SK-N-SH (cell line): ENCODE measurements at regions of chr17 and their contacts with region 1.

Region 1: DNA sequence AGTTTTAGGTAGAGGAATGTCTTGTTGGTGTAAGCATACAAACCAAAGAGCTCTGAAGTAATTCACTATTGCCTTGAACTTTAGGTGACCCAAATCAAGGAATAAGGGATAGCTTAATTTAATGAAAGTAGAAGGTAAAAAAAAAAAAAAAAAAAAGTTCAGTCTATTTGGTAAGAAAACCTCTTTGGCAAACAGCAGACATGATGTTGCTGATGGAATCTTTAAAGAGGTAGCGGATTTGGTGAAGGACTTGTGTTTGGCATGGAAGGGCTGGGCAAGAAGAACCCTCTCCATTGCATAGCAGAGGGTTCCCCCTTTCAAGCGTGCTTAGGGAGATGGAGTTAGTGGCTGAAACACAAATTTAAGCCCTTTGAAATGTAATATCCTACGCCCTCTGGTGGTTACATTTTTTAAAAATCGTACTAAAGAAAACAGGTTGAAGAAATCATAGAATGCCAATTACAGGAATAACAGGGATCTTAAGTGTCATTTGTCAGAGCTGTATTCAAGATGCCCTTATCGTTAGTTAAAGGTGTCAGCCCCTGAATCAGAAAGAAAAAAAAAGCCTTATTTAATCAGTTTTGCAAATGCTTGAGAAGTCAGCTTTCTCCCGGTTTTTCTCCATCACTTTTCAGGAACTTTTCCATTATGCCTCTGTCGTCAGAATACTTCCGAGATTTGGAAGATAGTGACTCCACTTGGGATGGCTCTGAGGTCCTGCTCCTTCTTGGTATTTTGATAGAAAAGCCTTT is 383.1 kb downstream of the KCNJ2 start:
- DNase-seq: peak; percentile 72
- H3K4me3 ChIP-seq: no peak overlapping the region
- H3K27ac ChIP-seq: no peak overlapping the region; a peak in 1 of 4 replicates
- H3K4me1 ChIP-seq: peaks cover 0 to 2% of the 10 kb centered on the region in 2 experiments; a peak in 2 of 4 replicates
- H3K27me3 ChIP-seq: no peaks in the 10 kb centered on the region
- CTCF ChIP-seq: peak; percentile 81
- EP300 ChIP-seq: no peak
- RAD21 ChIP-seq: peak; percentile 87

Region 2: GRCh38 chr17:69567130-69567529 is 985.3 kb before region 1 on chr17:
- CTCF ChIA-PET with region 1: interaction called, 18 read pairs
- POLR2A ChIA-PET with region 1: no interaction called
- DNase-seq: no peak
- H3K4me3 ChIP-seq: no peak overlapping the region
- H3K27ac ChIP-seq: no peak overlapping the region
- H3K4me1 ChIP-seq: peaks cover 0 to 3% of the 10 kb centered on the region in 2 experiments; a peak in 1 of 4 replicates
- H3K27me3 ChIP-seq: no peaks in the 10 kb centered on the region
- CTCF ChIP-seq: no peak
- EP300 ChIP-seq: no peak
- RAD21 ChIP-seq: no peak

Region 3: GRCh38 chr17:70144260-70144846 is 408.1 kb before region 1 on chr17:
- CTCF ChIA-PET with region 1: interaction called, 14 read pairs
- POLR2A ChIA-PET with region 1: no interaction called
- DNase-seq: peak; percentile 47
- H3K4me3 ChIP-seq: no peak overlapping the region; a peak in 1 of 4 replicates
- H3K27ac ChIP-seq: no peak overlapping the region
- H3K4me1 ChIP-seq: peaks cover 0 to 3% of the 10 kb centered on the region in 2 experiments; a peak in 2 of 4 replicates
- H3K27me3 ChIP-seq: no peaks in the 10 kb centered on the region
- CTCF ChIP-seq: peak; percentile 95
- EP300 ChIP-seq: no peak
- RAD21 ChIP-seq: peak; percentile 83

Region 4: GRCh38 chr17:70365091-70365583 is 187.3 kb before region 1 on chr17:
- CTCF ChIA-PET with region 1: no interaction called
- POLR2A ChIA-PET with region 1: no interaction called
- DNase-seq: no peak
- H3K4me3 ChIP-seq: no peak overlapping the region
- H3K27ac ChIP-seq: peak overlapping the region; percentile 42 to 50; a peak in 3 of 4 replicates
- H3K4me1 ChIP-seq: peaks cover 0 to 5% of the 10 kb centered on the region in 2 experiments; a peak in 2 of 4 replicates
- H3K27me3 ChIP-seq: no peaks in the 10 kb centered on the region
- CTCF ChIP-seq: no peak
- EP300 ChIP-seq: no peak
- RAD21 ChIP-seq: no peak

Region 5: GRCh38 chr17:70378076-70378475 is 174.3 kb before region 1 on chr17:
- CTCF ChIA-PET with region 1: interaction called, 12 read pairs
- POLR2A ChIA-PET with region 1: no interaction called
- DNase-seq: peak; percentile 20
- H3K4me3 ChIP-seq: no peak overlapping the region
- H3K27ac ChIP-seq: peak overlapping the region in 1 of 2 experiments; percentile 71; a peak in 2 of 4 replicates
- H3K4me1 ChIP-seq: peaks cover 0 to 20% of the 10 kb centered on the region in 2 experiments; a peak in 2 of 4 replicates
- H3K27me3 ChIP-seq: no peaks in the 10 kb centered on the region
- CTCF ChIP-seq: no peak
- EP300 ChIP-seq: peak in 1 of 2 experiments; percentile 89; a peak in 2 of 4 replicates
- RAD21 ChIP-seq: peak; percentile 16; the same call in 1 of the 2 replicates

Region 6: DNA sequence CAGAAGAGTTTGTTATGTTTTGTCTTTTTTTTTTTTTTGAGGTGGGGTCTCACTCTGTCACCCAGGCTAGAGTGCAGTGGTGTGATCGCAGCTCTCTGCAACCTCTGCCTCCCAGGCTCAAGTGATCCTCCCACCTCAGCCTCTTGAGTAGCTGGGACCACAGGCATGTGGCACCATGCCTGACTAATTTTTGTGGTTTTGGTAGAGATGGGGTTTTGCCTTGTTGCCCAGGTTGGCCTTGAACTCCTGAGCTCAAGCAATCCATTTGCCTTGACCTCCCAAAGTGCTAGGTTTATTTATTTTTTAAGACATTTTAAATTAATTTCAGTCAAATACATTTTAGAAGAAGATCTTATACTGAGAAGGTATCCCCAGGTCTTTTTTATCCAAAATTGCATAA is 16.4 kb before region 1 on chr17:
- CTCF ChIA-PET with region 1: interaction called, 14 read pairs
- POLR2A ChIA-PET with region 1: no interaction called
- DNase-seq: no peak
- H3K4me3 ChIP-seq: no peak overlapping the region
- H3K27ac ChIP-seq: no peak overlapping the region
- H3K4me1 ChIP-seq: no peaks in the 10 kb centered on the region
- H3K27me3 ChIP-seq: no peaks in the 10 kb centered on the region
- CTCF ChIP-seq: no peak
- EP300 ChIP-seq: no peak
- RAD21 ChIP-seq: no peak

Region 7: DNA sequence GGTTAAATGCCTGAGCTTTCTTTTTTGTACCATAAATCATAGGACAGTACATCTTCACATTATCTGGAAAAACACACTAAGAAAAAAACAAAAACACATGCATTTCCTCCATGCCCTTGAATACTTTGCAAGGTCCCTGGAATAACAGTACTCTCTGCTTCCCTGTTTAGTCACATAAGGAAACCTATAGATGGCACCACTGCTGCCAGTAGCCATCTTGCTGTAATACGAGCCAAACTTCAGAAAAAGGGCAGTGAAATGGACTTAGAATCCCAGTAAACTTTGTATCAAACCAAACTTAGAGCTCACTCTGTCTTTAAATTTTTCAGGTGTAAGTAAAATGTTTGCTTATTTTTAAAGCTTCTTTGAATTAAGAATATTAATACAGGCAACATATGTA is 52.4 kb after region 1 on chr17:
- CTCF ChIA-PET with region 1: no interaction called
- POLR2A ChIA-PET with region 1: no interaction called
- DNase-seq: no peak
- H3K4me3 ChIP-seq: no peak overlapping the region
- H3K27ac ChIP-seq: no peak overlapping the region
- H3K4me1 ChIP-seq: no peaks in the 10 kb centered on the region; a peak in 1 of 4 replicates
- H3K27me3 ChIP-seq: no peaks in the 10 kb centered on the region
- CTCF ChIP-seq: no peak; the same call in 1 of the 2 replicates
- EP300 ChIP-seq: no peak
- RAD21 ChIP-seq: no peak

Region 8: DNA sequence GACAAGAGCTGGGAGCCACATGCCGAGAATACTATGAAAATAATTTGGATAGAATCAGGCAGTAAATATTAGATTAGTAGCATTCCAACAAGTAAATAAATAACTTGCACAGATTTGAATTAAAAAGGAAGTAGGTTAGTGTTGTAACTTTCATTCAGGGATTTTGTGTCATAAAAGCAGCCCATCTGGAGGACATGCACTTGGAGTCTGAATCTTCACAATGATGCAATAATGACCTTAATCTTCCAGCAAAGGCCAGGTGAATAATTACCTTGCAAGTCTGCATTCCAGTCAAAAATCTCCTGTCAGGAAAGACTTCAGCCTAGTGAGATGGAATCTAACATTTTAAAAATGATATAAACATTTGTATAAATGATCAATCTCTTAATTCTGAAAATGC is 135.0 kb after region 1 on chr17:
- CTCF ChIA-PET with region 1: no interaction called
- POLR2A ChIA-PET with region 1: no interaction called
- DNase-seq: no peak
- H3K4me3 ChIP-seq: no peak overlapping the region
- H3K27ac ChIP-seq: no peak overlapping the region
- H3K4me1 ChIP-seq: no peaks in the 10 kb centered on the region
- H3K27me3 ChIP-seq: no peaks in the 10 kb centered on the region
- CTCF ChIP-seq: no peak
- EP300 ChIP-seq: no peak
- RAD21 ChIP-seq: no peak